SK-N-SH (cell line): ENCODE measurements at regions of chr12 and their contacts with region 1.

Region 1: GRCh38 chr12:55619354-55620138 is 17.1 kb upstream of the OR10P1 start:
- DNase-seq: peak; percentile 62
- H3K4me3 ChIP-seq: no peak overlapping the region
- H3K27ac ChIP-seq: no peak overlapping the region
- H3K4me1 ChIP-seq: no peaks in the 10 kb centered on the region
- H3K27me3 ChIP-seq: peaks cover 24% of the 10 kb centered on the region; the same call in 1 of the 2 replicates
- CTCF ChIP-seq: peak; percentile 91
- EP300 ChIP-seq: no peak
- RAD21 ChIP-seq: peak; percentile 85

Region 2: DNA sequence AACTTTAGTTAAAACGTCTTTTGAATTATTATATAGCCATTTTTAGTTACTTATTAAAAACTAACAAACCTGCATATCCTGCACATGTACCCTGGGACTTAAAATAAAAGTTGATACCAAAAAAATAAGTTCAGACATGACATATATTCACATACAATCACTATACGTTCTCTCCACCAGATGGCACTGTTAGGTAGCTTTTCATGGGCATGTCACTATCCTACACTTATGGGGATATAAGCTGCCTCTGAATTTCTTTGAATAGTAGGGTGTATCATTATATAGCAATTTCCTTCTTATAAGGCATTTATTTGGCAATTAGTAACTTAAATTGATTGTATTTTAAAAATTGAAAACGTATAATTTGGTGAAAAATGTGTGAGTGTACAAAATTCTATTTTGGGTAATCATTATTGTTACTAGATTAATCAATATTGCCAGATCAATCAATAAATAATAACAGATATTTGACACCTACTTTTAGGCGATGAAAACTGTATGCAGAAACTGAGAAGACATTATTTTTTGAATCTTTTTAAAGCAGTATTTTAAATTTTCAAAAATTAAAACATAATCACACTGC is 430.5 kb before region 1 on chr12:
- CTCF ChIA-PET with region 1: interaction called, 85 read pairs
- POLR2A ChIA-PET with region 1: no interaction called
- DNase-seq: peak; percentile 39
- H3K4me3 ChIP-seq: no peak overlapping the region
- H3K27ac ChIP-seq: no peak overlapping the region
- H3K4me1 ChIP-seq: no peaks in the 10 kb centered on the region
- H3K27me3 ChIP-seq: peaks cover 7% of the 10 kb centered on the region; the same call in 1 of the 2 replicates
- CTCF ChIP-seq: peak; percentile 85
- EP300 ChIP-seq: no peak
- RAD21 ChIP-seq: peak; percentile 77